Activated naive CD4-positive, alpha-beta T cell treated with anti-CD3 and anti-CD28 coated beads for 36 hours (primary cell): ENCODE measurements at regions of chr16 and their contacts with region 1.

Region 1: GRCh38 chr16:71526111-71526631 is at the start of gene CHST4:
- DNase-seq: no peak
- H3K4me3 Mint-ChIP-seq: no peak within 1 kb of the TSS
- H3K27ac Mint-ChIP-seq: no peak within 1 kb of the TSS
- H3K4me1 Mint-ChIP-seq: no peaks in the 10 kb centered on the region
- H3K27me3 Mint-ChIP-seq: peaks cover 20% of the 10 kb centered on the region
- total RNA-seq, gene CHST4: not detected

Region 2: GRCh38 chr16:71367241-71367976 is 158.8 kb before region 1 on chr16:
- CTCF ChIA-PET with region 1: no interaction called
- intact Hi-C with region 1: no loop called
- DNase-seq: peak; percentile 69
- H3K4me3 Mint-ChIP-seq: no peak overlapping the region
- H3K27ac Mint-ChIP-seq: no peak overlapping the region
- H3K4me1 Mint-ChIP-seq: peaks cover 9% of the 10 kb centered on the region
- H3K27me3 Mint-ChIP-seq: peaks cover 10% of the 10 kb centered on the region

Region 3: GRCh38 chr16:71537643-71538042 is 11.5 kb after region 1 on chr16:
- CTCF ChIA-PET with region 1: interaction called, 10 read pairs
- intact Hi-C with region 1: no loop called
- DNase-seq: peak; percentile 65
- H3K4me3 Mint-ChIP-seq: no peak overlapping the region
- H3K27ac Mint-ChIP-seq: no peak overlapping the region
- H3K4me1 Mint-ChIP-seq: no peaks in the 10 kb centered on the region
- H3K27me3 Mint-ChIP-seq: no peaks in the 10 kb centered on the region

Region 4: GRCh38 chr16:71568551-71568950 is 42.4 kb after region 1 on chr16:
- CTCF ChIA-PET with region 1: no interaction called
- intact Hi-C with region 1: no loop called
- DNase-seq: no peak
- H3K4me3 Mint-ChIP-seq: no peak overlapping the region
- H3K27ac Mint-ChIP-seq: no peak overlapping the region
- H3K4me1 Mint-ChIP-seq: peaks cover 15% of the 10 kb centered on the region
- H3K27me3 Mint-ChIP-seq: no peaks in the 10 kb centered on the region